ENCODE measurements at regions of chr10 and their contacts with region 1.

Region 1: GRCh38 chr10:80500572-80501380 is 36.9 kb upstream of the SH2D4B start:
- DNase-seq: peak in 1 of 5 donors; percentile 31
- H3K4me3 ChIP-seq: no peak overlapping the region
- H3K27ac ChIP-seq: peak overlapping the region; percentile 43 to 54
- H3K4me1 ChIP-seq: peaks cover 4 to 78% (median 62%) of the 10 kb centered on the region in 3 donors
- H3K27me3 ChIP-seq: no peaks in the 10 kb centered on the region
- CTCF ChIP-seq: no peak

Region 2: DNA sequence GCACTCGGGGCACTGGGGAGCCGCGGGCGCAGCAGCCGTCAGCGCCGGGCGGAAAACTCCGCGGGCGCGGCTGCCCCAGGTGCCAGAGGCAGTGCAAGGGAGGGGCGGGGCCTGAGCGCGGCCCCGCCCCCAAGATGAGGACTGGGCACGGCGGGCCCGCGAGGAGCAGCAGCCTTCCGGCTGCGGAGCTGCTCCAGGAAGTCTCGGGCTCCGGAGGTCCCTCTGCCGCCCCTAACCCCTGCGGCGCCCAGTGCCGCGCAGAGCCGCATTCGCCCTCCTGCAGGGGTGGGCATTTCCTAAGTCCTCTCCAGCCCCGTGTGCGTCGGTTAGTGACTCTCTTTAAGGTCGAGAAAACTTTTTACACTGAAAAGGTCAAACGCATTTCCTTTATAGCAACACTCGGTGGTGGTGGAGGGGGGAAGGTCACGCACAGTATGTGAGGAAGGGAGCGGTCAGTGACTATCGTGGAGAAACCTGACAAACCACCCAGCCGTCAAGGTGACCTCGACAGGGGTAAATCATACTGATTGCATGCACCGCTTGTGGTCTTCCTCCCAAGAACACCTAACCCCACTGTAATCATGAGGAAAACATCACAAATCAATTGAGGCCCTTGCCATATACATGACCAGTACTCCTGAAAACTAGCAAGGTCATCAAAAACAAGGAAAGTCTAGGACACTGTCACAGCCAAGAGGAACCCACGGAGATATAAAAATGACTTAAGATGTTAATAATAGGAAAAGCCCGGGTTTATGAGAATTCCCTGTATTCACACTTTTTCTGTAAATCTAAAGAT is 295.1 kb before region 1 on chr10 and contains the start of gene ANXA11:
- intact Hi-C with region 1: no loop called
- DNase-seq: peak; percentile 82 to 95 (median 91)
- H3K4me3 ChIP-seq: peak within 1 kb of the TSS; percentile 86 to 92 (median 87)
- H3K27ac ChIP-seq: peak within 1 kb of the TSS; percentile 98 to 99
- H3K4me1 ChIP-seq: peaks cover 0 to 49% (median 37%) of the 10 kb centered on the region in 3 donors
- H3K27me3 ChIP-seq: no peaks in the 10 kb centered on the region
- CTCF ChIP-seq: no peak
- total RNA-seq, gene ANXA11: 435 TPM

Region 3: GRCh38 chr10:80356563-80356988 is 144.2 kb before region 1 on chr10 and contains the starts of genes DYDC1 and DYDC2:
- intact Hi-C with region 1: no loop called
- DNase-seq: peak; percentile 82 to 95 (median 92)
- H3K4me3 ChIP-seq: peak within 1 kb of the TSS; percentile 24 to 50 (median 39)
- H3K27ac ChIP-seq: no peak within 1 kb of the TSS
- H3K4me1 ChIP-seq: peaks cover 0 to 4% (median 0%) of the 10 kb centered on the region in 3 donors
- H3K27me3 ChIP-seq: no peaks in the 10 kb centered on the region
- CTCF ChIP-seq: no peak
- total RNA-seq, gene DYDC1: not detected
- total RNA-seq, gene DYDC2: 0.57 TPM

Region 4: GRCh38 chr10:80459047-80459931 is 41.5 kb before region 1 on chr10:
- intact Hi-C with region 1: loop called (anchors 5 kb)
- DNase-seq: peak in 1 of 5 donors; percentile 82
- H3K4me3 ChIP-seq: peak overlapping the region in 1 of 3 donors; percentile 17
- H3K27ac ChIP-seq: peak overlapping the region; percentile 55 to 78
- H3K4me1 ChIP-seq: peaks cover 4 to 71% (median 66%) of the 10 kb centered on the region in 3 donors
- H3K27me3 ChIP-seq: no peaks in the 10 kb centered on the region
- CTCF ChIP-seq: no peak

Region 5: GRCh38 chr10:80580638-80581468 is 80.1 kb after region 1 on chr10:
- intact Hi-C with region 1: no loop called
- DNase-seq: peak in 1 of 5 donors; percentile 9
- H3K4me3 ChIP-seq: no peak overlapping the region
- H3K27ac ChIP-seq: no peak overlapping the region
- H3K4me1 ChIP-seq: no peaks in the 10 kb centered on the region
- H3K27me3 ChIP-seq: no peaks in the 10 kb centered on the region
- CTCF ChIP-seq: no peak

Measured in kidney (tissue), 22 donors.